Transverse colon (tissue), 4 donors: ENCODE measurements at regions of chr4 and their contacts with region 1.

Region 1: GRCh38 chr4:98658287-98659105 is at the start of gene TSPAN5:
- DNase-seq: peak; percentile 82
- H3K4me3 ChIP-seq: peak within 1 kb of the TSS; percentile 51 to 84 (median 70)
- H3K27ac ChIP-seq: peak within 1 kb of the TSS; percentile 71 to 84 (median 78)
- H3K4me1 ChIP-seq: peaks cover 4 to 31% (median 14%) of the 10 kb centered on the region in 4 donors
- H3K27me3 ChIP-seq: no peaks in the 10 kb centered on the region
- CTCF ChIP-seq: no peak
- EP300 ChIP-seq: no peak
- POLR2A ChIP-seq: no peak
- total RNA-seq, gene TSPAN5: 1.1 to 9.6 (median 4.4) TPM

Region 2: DNA sequence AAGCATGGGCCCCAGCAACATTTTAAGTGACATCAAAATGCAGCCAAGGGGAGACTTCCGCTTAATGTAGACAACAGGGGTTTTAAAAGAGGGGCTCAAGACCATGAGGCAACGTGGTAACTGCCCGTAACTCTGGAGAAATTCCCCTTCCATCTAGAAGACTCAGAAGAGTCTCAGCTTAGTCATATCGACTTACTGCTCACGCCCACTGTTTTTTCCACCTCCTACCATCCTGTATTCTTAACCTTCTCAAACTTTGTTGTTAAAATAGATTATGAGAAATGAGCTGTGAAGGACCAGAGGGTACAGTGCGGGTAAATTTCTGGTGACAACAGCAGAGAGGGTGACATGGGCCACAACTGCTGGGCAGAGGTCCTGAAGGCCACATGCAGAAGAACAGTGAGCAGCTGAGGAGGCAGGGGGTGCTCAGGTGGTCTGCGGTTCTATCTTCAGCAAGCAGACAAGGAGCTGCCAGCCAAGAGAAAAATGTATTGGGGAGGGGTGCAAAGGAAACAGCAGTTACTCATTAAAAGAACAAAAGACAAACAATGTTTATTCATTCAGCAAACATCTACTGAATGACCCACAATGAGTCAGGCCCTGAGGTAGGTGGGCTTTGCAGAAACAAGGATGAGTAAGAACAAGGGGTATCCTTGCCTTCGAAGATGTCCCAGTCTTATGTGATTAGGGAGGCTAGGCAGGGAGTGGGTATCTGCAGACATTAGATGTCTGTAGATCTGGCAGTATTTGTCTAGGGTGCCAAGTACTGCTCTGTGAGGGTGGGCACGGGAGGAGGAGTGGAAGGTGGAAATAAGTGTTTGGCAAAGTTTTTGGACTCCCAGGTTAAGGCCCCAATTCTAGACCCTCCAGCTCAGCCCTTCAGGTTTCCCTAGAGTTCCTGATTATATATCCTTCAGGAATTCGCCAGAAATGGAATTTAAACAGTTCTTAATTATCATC is 175.4 kb before region 1 on chr4:
- in situ Hi-C with region 1: no loop called
- intact Hi-C with region 1: loop called (anchors 10 kb)
- DNase-seq: no peak
- H3K4me3 ChIP-seq: no peak overlapping the region
- H3K27ac ChIP-seq: no peak overlapping the region
- H3K4me1 ChIP-seq: no peaks in the 10 kb centered on the region
- H3K27me3 ChIP-seq: no peaks in the 10 kb centered on the region
- CTCF ChIP-seq: no peak
- EP300 ChIP-seq: no peak
- POLR2A ChIP-seq: no peak